CD4-positive, alpha-beta memory T cell (primary cell): ENCODE measurements at regions of chr5 and their contacts with region 1.

Region 1: GRCh38 chr5:90866333-90866732 is 307.7 kb downstream of the ADGRV1 start:
- DNase-seq: peak in 4 of 5 donors; percentile 19 to 30 (median 21)
- H3K4me3 ChIP-seq: no peak overlapping the region
- H3K4me3 Mint-ChIP-seq: no peak overlapping the region
- H3K27ac ChIP-seq: no peak overlapping the region
- H3K27ac Mint-ChIP-seq: no peak overlapping the region
- H3K4me1 ChIP-seq: no peaks in the 10 kb centered on the region
- H3K4me1 Mint-ChIP-seq: no peaks in the 10 kb centered on the region
- H3K27me3 ChIP-seq: no peaks in the 10 kb centered on the region
- H3K27me3 Mint-ChIP-seq: peaks cover 10 to 13% of the 10 kb centered on the region in 2 donors

Region 2: DNA sequence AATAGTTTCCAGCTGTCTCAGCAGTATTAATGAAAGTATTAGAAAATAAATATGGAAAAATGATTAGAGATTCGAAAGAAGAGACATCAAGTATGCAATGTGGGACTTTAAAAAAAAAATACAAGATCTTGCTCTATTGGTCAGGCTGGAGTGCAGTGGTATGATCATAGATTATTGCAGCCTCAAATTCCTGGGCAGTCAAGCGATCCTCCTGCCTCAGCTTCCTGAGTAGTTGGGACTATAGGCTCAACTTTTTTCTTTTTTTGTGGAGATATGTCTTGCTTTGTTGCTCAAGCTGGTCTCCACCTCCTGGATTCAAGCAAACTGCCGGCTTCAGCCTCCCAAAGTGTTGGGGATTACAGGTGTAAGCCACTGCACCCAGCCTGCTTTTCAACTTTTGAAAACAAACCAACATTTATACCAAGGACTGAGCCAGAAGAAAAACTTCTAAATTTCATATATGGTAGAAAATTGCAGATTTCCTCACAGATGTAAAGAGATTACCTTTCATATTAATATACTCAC is 15.4 kb after region 1 on chr5:
- CTCF ChIA-PET with region 1: interaction called, 17 read pairs
- POLR2A ChIA-PET with region 1: no interaction called
- intact Hi-C with region 1: no loop called
- DNase-seq: no peak
- H3K4me3 ChIP-seq: no peak overlapping the region
- H3K4me3 Mint-ChIP-seq: no peak overlapping the region
- H3K27ac ChIP-seq: no peak overlapping the region
- H3K27ac Mint-ChIP-seq: no peak overlapping the region
- H3K4me1 ChIP-seq: no peaks in the 10 kb centered on the region
- H3K4me1 Mint-ChIP-seq: no peaks in the 10 kb centered on the region
- H3K27me3 ChIP-seq: no peaks in the 10 kb centered on the region
- H3K27me3 Mint-ChIP-seq: peaks cover 11 to 18% of the 10 kb centered on the region in 2 donors

Region 3: GRCh38 chr5:90949469-90950358 is 83.4 kb after region 1 on chr5:
- CTCF ChIA-PET with region 1: no interaction called
- POLR2A ChIA-PET with region 1: no interaction called
- intact Hi-C with region 1: no loop called
- DNase-seq: no peak
- H3K4me3 ChIP-seq: no peak overlapping the region
- H3K4me3 Mint-ChIP-seq: no peak overlapping the region
- H3K27ac ChIP-seq: no peak overlapping the region
- H3K27ac Mint-ChIP-seq: no peak overlapping the region
- H3K4me1 ChIP-seq: no peaks in the 10 kb centered on the region
- H3K4me1 Mint-ChIP-seq: no peaks in the 10 kb centered on the region
- H3K27me3 ChIP-seq: no peaks in the 10 kb centered on the region
- H3K27me3 Mint-ChIP-seq: peaks cover 4 to 6% of the 10 kb centered on the region in 2 donors

Region 4: GRCh38 chr5:91101600-91102379 is 235.5 kb after region 1 on chr5:
- CTCF ChIA-PET with region 1: no interaction called
- POLR2A ChIA-PET with region 1: no interaction called
- intact Hi-C with region 1: loop called (anchors 5 kb)
- DNase-seq: peak; percentile 23 to 49 (median 35)
- H3K4me3 ChIP-seq: no peak overlapping the region
- H3K4me3 Mint-ChIP-seq: no peak overlapping the region
- H3K27ac ChIP-seq: no peak overlapping the region
- H3K27ac Mint-ChIP-seq: no peak overlapping the region
- H3K4me1 ChIP-seq: no peaks in the 10 kb centered on the region
- H3K4me1 Mint-ChIP-seq: no peaks in the 10 kb centered on the region
- H3K27me3 ChIP-seq: no peaks in the 10 kb centered on the region
- H3K27me3 Mint-ChIP-seq: peaks cover 4 to 5% of the 10 kb centered on the region in 2 donors

Region 5: DNA sequence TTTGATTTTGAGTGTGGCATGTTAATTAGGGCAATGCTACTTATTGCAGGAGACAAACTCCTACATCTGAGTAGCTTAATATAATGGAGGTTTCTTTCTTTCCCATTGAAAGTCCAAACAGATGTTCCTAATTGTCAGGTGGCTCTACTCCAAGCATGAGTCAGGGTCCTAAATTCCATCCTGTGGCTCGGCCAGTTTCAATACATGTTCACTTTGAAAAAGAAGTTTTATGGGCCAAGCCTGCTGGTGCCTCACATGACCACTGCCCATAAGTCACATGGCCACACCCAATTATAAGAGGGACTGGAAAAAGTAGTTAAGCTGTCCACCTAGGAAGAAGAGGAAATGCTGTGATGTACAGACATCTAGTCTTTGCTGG is 346.4 kb after region 1 on chr5:
- CTCF ChIA-PET with region 1: no interaction called
- POLR2A ChIA-PET with region 1: no interaction called
- intact Hi-C with region 1: no loop called
- DNase-seq: no peak
- H3K4me3 ChIP-seq: no peak overlapping the region
- H3K4me3 Mint-ChIP-seq: no peak overlapping the region
- H3K27ac ChIP-seq: no peak overlapping the region
- H3K27ac Mint-ChIP-seq: no peak overlapping the region
- H3K4me1 ChIP-seq: no peaks in the 10 kb centered on the region
- H3K4me1 Mint-ChIP-seq: no peaks in the 10 kb centered on the region
- H3K27me3 ChIP-seq: no peaks in the 10 kb centered on the region
- H3K27me3 Mint-ChIP-seq: peaks cover 5 to 10% of the 10 kb centered on the region in 2 donors